ENCODE measurements at regions of chr3 and their contacts with region 1.

Region 1: DNA sequence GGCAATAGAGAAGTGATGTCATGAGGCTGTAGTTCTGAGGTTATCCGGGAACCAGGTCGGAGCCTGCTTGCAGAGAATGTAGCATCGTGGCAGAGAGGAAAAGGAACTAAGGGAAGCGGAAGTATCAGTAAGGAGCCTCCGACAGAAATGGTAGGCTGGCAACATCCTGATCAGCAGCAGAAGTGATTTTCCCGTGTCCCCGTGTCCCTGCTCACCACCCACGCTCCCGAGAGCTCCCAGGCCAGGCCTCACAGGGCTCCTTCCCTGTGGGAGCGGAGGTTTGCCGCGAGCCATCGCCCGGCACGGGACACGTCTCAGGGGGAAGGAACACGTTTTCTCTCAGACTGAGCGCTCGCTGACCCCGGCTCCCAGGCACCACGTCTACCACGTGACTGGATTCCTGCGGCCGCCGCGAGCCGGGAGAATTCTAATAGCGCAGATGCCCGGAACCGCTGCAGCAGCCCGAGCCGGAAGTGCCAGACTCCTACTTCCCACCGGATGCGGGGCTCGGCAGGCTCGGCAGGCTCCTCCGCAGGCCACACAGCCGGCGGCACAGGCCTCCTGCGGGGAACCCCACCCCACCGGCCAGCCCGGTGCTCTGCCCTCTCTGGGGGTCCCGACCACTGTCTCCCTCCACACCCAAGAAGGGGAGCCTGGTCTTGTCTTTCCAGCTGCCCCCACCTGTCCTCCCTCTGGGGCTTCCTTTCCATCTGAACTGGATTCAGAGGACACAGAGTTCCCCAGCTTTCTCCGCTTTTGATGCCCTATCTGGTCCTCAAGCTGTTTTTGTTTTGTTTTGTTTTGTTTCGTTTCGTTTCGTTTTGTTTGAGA is 99.3 kb downstream of the BDH1 start:
- DNase-seq: peak; percentile 81 to 94
- H3K4me3 ChIP-seq: peak overlapping the region; percentile 71
- H3K27ac ChIP-seq: peak overlapping the region; percentile 63
- H3K4me1 ChIP-seq: peaks cover 26% of the 10 kb centered on the region
- H3K27me3 ChIP-seq: no peaks in the 10 kb centered on the region
- CTCF ChIP-seq: no peak

Region 2: GRCh38 chr3:196528639-196529233 is 927.7 kb before region 1 on chr3:
- CTCF ChIA-PET with region 1: no interaction called
- POLR2A ChIA-PET with region 1: no interaction called
- intact Hi-C with region 1: no loop called
- DNase-seq: peak; percentile 59 to 93
- H3K4me3 ChIP-seq: peak overlapping the region; percentile 66
- H3K27ac ChIP-seq: no peak overlapping the region
- H3K4me1 ChIP-seq: no peaks in the 10 kb centered on the region
- H3K27me3 ChIP-seq: no peaks in the 10 kb centered on the region
- CTCF ChIP-seq: peak; percentile 89

Region 3: DNA sequence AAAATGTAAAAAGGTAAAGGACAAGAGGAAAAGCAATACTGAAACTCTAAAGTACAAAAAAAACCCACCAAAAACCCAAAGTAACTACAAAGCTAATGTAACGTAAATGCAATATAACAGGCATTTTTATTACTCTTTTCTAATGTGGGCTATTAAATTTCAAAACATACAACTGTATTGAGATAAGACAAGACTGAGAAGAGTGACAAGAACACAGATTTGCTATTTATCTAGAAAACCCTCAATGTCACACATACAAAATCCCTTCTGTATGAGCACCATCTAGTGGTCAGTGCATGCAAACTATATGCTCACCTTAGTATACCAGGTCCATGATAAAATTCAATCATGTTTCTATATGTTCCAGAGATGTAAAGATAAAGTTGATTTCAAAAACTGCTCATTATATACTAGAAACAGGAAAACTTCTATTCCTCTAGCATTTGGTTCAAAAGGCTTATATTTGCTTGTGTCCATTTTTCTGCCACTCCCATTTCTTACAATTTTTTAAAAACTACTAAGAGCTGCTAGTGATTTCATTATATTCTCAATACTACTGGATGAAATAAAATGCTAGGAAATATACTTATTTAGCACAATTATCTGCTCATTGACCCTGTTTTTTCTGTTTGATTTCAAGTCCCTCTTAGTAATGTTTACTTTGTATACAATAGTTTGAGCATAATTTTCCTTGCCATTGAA is 269.4 kb before region 1 on chr3:
- CTCF ChIA-PET with region 1: no interaction called
- POLR2A ChIA-PET with region 1: no interaction called
- intact Hi-C with region 1: no loop called
- DNase-seq: peak; percentile 8 to 69
- H3K4me3 ChIP-seq: no peak overlapping the region
- H3K27ac ChIP-seq: no peak overlapping the region
- H3K4me1 ChIP-seq: peaks cover 16% of the 10 kb centered on the region
- H3K27me3 ChIP-seq: no peaks in the 10 kb centered on the region
- CTCF ChIP-seq: peak; percentile 95

Region 4: DNA sequence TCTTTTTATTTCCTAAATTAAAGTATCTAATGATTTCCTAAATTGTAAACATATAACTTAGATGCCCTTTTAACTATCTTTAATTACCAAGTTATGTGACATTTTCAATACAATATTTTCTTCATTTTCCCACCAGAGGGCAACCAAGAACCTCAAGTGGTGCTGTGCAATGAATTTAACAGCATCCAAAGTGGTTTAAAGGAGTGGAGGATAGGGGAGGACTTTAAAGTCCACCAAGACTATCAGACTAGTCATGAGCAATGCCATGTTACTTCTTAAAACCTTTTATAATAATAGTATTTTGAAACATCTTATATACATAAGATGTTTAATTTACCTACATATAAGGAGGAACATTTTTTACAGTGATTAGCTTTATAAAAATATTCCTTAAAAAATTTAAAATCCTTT is 232.4 kb before region 1 on chr3:
- CTCF ChIA-PET with region 1: interaction called, 3 read pairs
- POLR2A ChIA-PET with region 1: no interaction called
- intact Hi-C with region 1: loop called (anchors 1 kb)
- DNase-seq: peak; percentile 14 to 62
- H3K4me3 ChIP-seq: no peak overlapping the region
- H3K27ac ChIP-seq: no peak overlapping the region
- H3K4me1 ChIP-seq: peaks cover 12% of the 10 kb centered on the region; the same call in 1 of the 2 replicates
- H3K27me3 ChIP-seq: no peaks in the 10 kb centered on the region
- CTCF ChIP-seq: peak; percentile 91

Region 5: DNA sequence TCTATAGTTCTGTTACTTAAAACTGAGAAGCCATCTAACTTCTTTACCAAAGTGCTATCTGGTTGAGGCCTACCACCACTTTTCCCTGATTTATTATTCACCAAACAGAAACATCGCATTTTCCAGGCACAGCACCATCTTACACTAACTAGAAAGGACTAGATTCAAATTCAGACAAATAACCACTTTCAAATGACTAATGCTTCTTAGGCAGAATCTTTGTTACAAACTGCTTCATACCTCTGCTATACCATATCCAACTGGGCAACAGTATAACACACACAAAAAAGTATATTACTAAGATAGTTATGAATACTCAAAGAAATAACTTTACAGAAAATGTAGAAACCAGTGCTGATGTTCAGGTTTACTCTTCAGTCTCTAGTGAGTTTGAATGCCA is 174.6 kb before region 1 on chr3:
- CTCF ChIA-PET with region 1: interaction called, 5 read pairs
- POLR2A ChIA-PET with region 1: interaction called, 8 read pairs
- intact Hi-C with region 1: loop called (anchors 1 kb)
- DNase-seq: no peak
- H3K4me3 ChIP-seq: no peak overlapping the region
- H3K27ac ChIP-seq: no peak overlapping the region
- H3K4me1 ChIP-seq: no peaks in the 10 kb centered on the region
- H3K27me3 ChIP-seq: no peaks in the 10 kb centered on the region
- CTCF ChIP-seq: no peak

Region 6: GRCh38 chr3:197305854-197306253 is 150.6 kb before region 1 on chr3:
- CTCF ChIA-PET with region 1: interaction called, 14 read pairs
- POLR2A ChIA-PET with region 1: no interaction called
- intact Hi-C with region 1: no loop called
- DNase-seq: no peak
- H3K4me3 ChIP-seq: no peak overlapping the region
- H3K27ac ChIP-seq: peak overlapping the region; percentile 88
- H3K4me1 ChIP-seq: peaks cover 71% of the 10 kb centered on the region
- H3K27me3 ChIP-seq: no peaks in the 10 kb centered on the region
- CTCF ChIP-seq: no peak

Region 7: GRCh38 chr3:197394464-197395321 is 61.8 kb before region 1 on chr3:
- CTCF ChIA-PET with region 1: interaction called, 10 read pairs
- POLR2A ChIA-PET with region 1: interaction called, 8 read pairs
- intact Hi-C with region 1: loop called (anchors 1 kb)
- DNase-seq: peak; percentile 91 to 97
- H3K4me3 ChIP-seq: no peak overlapping the region
- H3K27ac ChIP-seq: peak overlapping the region; percentile 70
- H3K4me1 ChIP-seq: peaks cover 15% of the 10 kb centered on the region
- H3K27me3 ChIP-seq: peaks cover 14% of the 10 kb centered on the region
- CTCF ChIP-seq: no peak

Region 8: GRCh38 chr3:197501879-197502620 is 45.6 kb after region 1 on chr3:
- CTCF ChIA-PET with region 1: interaction called, 7 read pairs
- POLR2A ChIA-PET with region 1: no interaction called
- intact Hi-C with region 1: loop called (anchors 1 kb)
- DNase-seq: peak in 1 of 2 experiments; percentile 65
- H3K4me3 ChIP-seq: no peak overlapping the region
- H3K27ac ChIP-seq: no peak overlapping the region
- H3K4me1 ChIP-seq: peaks cover 40% of the 10 kb centered on the region
- H3K27me3 ChIP-seq: no peaks in the 10 kb centered on the region
- CTCF ChIP-seq: peak; percentile 90